Transverse colon (tissue), 4 donors: ENCODE measurements at regions of chr14 and their contacts with region 1.

Region 1: DNA sequence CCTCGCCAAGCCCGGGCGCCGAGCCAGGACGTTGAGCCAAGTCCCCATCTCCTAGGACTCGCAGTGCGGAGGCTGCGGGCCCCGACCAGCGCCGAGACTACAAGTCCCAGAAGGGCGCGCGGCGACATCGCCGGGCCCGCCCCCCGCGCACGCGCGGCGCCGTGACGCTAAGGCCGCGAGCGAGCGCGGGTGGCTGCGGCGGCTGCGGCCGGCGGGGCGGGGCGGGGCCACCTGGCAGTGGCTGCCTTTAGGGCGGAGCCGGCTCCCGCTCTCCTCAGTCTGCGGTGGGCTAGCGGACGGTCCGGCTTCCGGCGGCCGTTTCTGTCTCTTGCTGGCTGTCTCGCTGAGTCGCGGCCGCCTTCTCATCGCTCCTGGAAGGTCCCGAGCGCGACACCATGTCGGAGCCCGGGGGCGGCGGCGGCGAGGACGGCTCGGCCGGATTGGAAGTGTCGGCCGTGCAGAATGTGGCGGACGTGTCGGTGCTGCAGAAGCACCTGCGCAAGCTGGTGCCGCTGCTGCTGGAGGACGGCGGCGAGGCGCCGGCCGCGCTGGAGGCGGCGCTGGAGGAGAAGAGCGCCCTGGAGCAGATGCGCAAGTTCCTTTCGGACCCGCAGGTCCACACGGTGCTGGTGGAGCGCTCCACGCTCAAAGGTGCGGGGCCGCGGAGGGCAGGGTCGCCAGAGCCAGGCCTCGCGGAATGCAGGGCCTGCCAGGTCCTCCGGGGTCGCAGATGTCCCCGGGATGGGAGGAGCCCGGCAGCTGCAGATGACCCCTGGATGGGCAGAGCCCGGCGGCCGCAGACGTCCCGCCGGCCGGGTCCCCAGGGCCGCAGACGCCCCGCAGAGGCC is at the start of gene DYNC1H1:
- DNase-seq: peak; percentile 92
- H3K4me3 ChIP-seq: peak within 1 kb of the TSS; percentile 87 to 99 (median 94)
- H3K27ac ChIP-seq: peak within 1 kb of the TSS; percentile 96 to 99 (median 98)
- H3K4me1 ChIP-seq: peaks cover 8 to 51% (median 29%) of the 10 kb centered on the region in 4 donors
- H3K27me3 ChIP-seq: no peaks in the 10 kb centered on the region
- CTCF ChIP-seq: no peak
- EP300 ChIP-seq: no peak
- POLR2A ChIP-seq: peak; percentile 97
- total RNA-seq, gene DYNC1H1: 471 to 647 (median 482) TPM

Region 2: GRCh38 chr14:101761032-101761880 is 203.3 kb before region 1 on chr14 and contains the start of gene PPP2R5C:
- in situ Hi-C with region 1: no loop called
- intact Hi-C with region 1: no loop called
- DNase-seq: peak; percentile 94
- H3K4me3 ChIP-seq: peak within 1 kb of the TSS; percentile 87 to 99 (median 90)
- H3K27ac ChIP-seq: peak within 1 kb of the TSS; percentile 88 to 100 (median 98)
- H3K4me1 ChIP-seq: peaks cover 13 to 38% (median 24%) of the 10 kb centered on the region in 4 donors
- H3K27me3 ChIP-seq: no peaks in the 10 kb centered on the region
- CTCF ChIP-seq: peak in 2 of 5 experiments; percentile 7 to 24
- EP300 ChIP-seq: no peak
- POLR2A ChIP-seq: peak; percentile 92
- total RNA-seq, gene PPP2R5C: 66.2 to 211 (median 116) TPM

Region 3: GRCh38 chr14:101878828-101879528 is 85.5 kb before region 1 on chr14:
- in situ Hi-C with region 1: no loop called
- intact Hi-C with region 1: no loop called
- DNase-seq: peak; percentile 39
- H3K4me3 ChIP-seq: no peak overlapping the region
- H3K27ac ChIP-seq: peak overlapping the region; percentile 58 to 77 (median 66)
- H3K4me1 ChIP-seq: peaks cover 28 to 53% (median 43%) of the 10 kb centered on the region in 4 donors
- H3K27me3 ChIP-seq: no peaks in the 10 kb centered on the region
- CTCF ChIP-seq: no peak
- EP300 ChIP-seq: no peak
- POLR2A ChIP-seq: no peak

Region 4: DNA sequence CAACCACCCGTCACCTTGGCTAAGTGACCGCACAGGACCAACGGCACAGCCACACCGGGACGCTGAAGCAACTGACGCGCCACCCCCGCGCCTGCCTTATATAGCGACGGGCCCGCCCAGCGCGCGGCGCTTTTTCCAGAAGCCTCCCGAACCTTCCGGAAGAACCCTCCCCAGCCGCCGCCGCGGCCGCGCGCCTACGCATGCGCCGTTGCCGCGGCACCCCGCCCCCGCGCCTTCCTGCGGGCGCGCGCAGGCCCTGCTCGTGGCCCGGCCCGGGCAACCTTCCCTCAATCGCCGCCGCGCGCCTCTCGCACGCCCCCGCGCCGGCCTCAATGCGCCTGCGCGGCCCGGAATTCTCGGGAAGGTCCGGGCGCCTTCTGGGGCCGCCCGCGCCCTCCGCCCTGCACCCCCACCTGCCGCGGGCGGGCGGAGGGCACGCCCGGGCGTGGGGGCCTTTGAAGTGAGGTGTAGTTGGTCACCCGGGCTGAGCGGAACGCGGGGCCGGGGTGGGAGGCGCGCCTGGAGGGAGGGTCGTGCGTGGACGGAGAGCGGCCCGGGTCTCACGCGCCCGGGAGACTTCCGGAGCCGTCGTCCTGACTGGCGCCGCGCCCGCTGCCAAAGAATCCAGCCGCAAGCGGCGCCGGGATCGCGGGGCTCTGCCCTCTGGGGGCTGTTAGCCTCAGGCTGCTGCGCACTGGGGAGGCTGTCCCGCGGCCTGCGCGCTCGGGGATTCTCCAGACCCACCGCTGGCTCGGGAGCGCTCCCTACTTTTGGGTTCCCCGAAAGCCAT is 122.6 kb after region 1 on chr14 and contains the start of gene HSP90AA1:
- in situ Hi-C with region 1: loop called in 1 of 4 experiments (anchors 10 kb)
- intact Hi-C with region 1: loop called (anchors 5 kb)
- DNase-seq: peak; percentile 94
- H3K4me3 ChIP-seq: peak within 1 kb of the TSS; percentile 95 to 99 (median 97)
- H3K27ac ChIP-seq: peak within 1 kb of the TSS; percentile 100
- H3K4me1 ChIP-seq: peaks cover 20 to 45% (median 38%) of the 10 kb centered on the region in 4 donors
- H3K27me3 ChIP-seq: no peaks in the 10 kb centered on the region
- CTCF ChIP-seq: peak in 2 of 5 experiments; percentile 10 to 19
- EP300 ChIP-seq: no peak
- POLR2A ChIP-seq: peak; percentile 99
- total RNA-seq, gene HSP90AA1: 112 to 347 (median 235) TPM

Region 5: DNA sequence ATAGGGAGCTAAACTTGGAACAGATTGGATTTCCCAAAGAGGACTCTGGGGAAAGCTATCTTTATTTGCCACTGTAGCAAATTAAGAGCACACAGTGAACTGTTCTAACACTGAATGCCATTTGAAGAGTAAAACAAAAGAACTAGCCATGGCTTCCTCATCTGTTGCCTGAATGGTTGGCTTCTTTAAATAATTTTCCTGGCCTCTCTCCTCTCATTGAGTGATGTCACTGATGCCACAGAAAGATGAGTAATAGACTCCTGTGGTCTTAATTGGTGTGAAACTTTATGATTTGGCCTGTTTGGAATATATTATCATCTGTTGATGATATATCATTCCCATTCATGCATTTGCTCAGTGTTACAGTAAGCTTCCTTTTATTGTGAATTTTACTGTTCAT is 217.7 kb after region 1 on chr14:
- in situ Hi-C with region 1: no loop called
- intact Hi-C with region 1: no loop called
- DNase-seq: no peak
- H3K4me3 ChIP-seq: no peak overlapping the region
- H3K27ac ChIP-seq: no peak overlapping the region
- H3K4me1 ChIP-seq: peaks cover 0 to 55% (median 13%) of the 10 kb centered on the region in 4 donors
- H3K27me3 ChIP-seq: no peaks in the 10 kb centered on the region
- CTCF ChIP-seq: no peak
- EP300 ChIP-seq: no peak
- POLR2A ChIP-seq: no peak